Caco-2 (cell line): ENCODE measurements at regions of chr11 and their contacts with region 1.

Region 1: DNA sequence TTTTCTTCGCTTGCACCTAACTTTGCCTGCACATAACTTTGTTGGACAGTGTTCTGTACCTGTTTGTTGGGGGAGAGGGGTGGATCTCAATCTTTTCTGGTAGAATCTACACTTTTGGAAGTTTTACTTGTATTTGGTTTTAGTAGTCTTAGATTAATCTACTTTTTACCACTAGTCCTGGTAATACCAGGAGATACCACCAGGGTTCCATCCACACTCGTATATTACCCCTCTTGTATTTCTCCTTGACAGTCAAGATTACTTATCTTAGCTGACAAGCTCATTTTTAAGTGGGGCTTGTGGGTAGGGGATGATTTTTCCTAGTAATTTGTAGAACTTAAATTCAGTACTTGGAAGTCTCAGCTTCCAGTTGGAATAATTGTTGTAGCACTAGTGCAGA is 37.3 kb upstream of the TECTA start:
- DNase-seq: peak in 1 of 2 experiments; percentile 21
- H3K4me3 ChIP-seq: no peak overlapping the region
- H3K4me3 Mint-ChIP-seq: no peak overlapping the region
- H3K27ac Mint-ChIP-seq: no peak overlapping the region
- H3K4me1 ChIP-seq: peaks cover 20% of the 10 kb centered on the region
- H3K4me1 Mint-ChIP-seq: peaks cover 26% of the 10 kb centered on the region
- H3K27me3 ChIP-seq: no peaks in the 10 kb centered on the region
- H3K27me3 Mint-ChIP-seq: no peaks in the 10 kb centered on the region
- CTCF ChIP-seq: peak; percentile 42 to 67

Region 2: GRCh38 chr11:121023848-121024751 is 39.6 kb before region 1 on chr11 and contains the start of gene TBCEL:
- CTCF ChIA-PET with region 1: no interaction called
- POLR2A ChIA-PET with region 1: no interaction called
- intact Hi-C with region 1: no loop called
- DNase-seq: peak; percentile 95 to 96
- H3K4me3 ChIP-seq: peak within 1 kb of the TSS; percentile 98
- H3K4me3 Mint-ChIP-seq: peak within 1 kb of the TSS; percentile 73
- H3K27ac Mint-ChIP-seq: peak within 1 kb of the TSS; percentile 77
- H3K4me1 ChIP-seq: peaks cover 4% of the 10 kb centered on the region; the same call in 1 of the 2 replicates
- H3K4me1 Mint-ChIP-seq: peaks cover 19% of the 10 kb centered on the region
- H3K27me3 ChIP-seq: no peaks in the 10 kb centered on the region
- H3K27me3 Mint-ChIP-seq: peaks cover 3% of the 10 kb centered on the region
- CTCF ChIP-seq: no peak
- total RNA-seq, gene TBCEL: 23.6 and 24.3 TPM in 2 replicates

Region 3: GRCh38 chr11:121039971-121040613 is 23.6 kb before region 1 on chr11:
- CTCF ChIA-PET with region 1: no interaction called
- POLR2A ChIA-PET with region 1: interaction called, 4 read pairs
- intact Hi-C with region 1: loop called (anchors 1 kb)
- DNase-seq: no peak
- H3K4me3 ChIP-seq: no peak overlapping the region
- H3K4me3 Mint-ChIP-seq: no peak overlapping the region
- H3K27ac Mint-ChIP-seq: no peak overlapping the region
- H3K4me1 ChIP-seq: peaks cover 17% of the 10 kb centered on the region
- H3K4me1 Mint-ChIP-seq: peaks cover 28% of the 10 kb centered on the region
- H3K27me3 ChIP-seq: no peaks in the 10 kb centered on the region
- H3K27me3 Mint-ChIP-seq: no peaks in the 10 kb centered on the region
- CTCF ChIP-seq: no peak

Region 4: GRCh38 chr11:121048464-121049233 is 15.1 kb before region 1 on chr11:
- CTCF ChIA-PET with region 1: no interaction called
- POLR2A ChIA-PET with region 1: interaction called, 4 read pairs
- intact Hi-C with region 1: loop called (anchors 2 kb)
- DNase-seq: no peak
- H3K4me3 ChIP-seq: no peak overlapping the region
- H3K4me3 Mint-ChIP-seq: no peak overlapping the region
- H3K27ac Mint-ChIP-seq: no peak overlapping the region
- H3K4me1 ChIP-seq: peaks cover 15% of the 10 kb centered on the region
- H3K4me1 Mint-ChIP-seq: peaks cover 9% of the 10 kb centered on the region
- H3K27me3 ChIP-seq: no peaks in the 10 kb centered on the region
- H3K27me3 Mint-ChIP-seq: no peaks in the 10 kb centered on the region
- CTCF ChIP-seq: no peak

Region 5: DNA sequence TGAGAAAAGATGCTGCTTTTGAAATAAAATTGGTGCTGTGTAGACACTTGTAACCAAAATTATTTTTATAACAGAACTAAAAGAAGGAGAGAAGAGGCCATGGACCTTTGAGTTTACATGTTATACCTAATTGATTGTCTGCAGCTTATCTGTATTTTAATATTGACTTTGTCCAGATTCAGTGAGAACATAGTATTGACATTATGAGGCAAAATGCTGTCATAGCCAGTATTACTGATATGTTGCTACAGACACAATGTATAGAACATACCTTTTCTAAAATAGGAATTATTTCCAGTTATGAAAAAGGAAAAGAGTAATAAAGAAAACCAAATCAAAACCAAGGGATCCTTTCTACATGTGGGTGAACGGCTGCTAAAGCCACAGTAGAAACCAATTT is 25.8 kb after region 1 on chr11:
- CTCF ChIA-PET with region 1: no interaction called
- POLR2A ChIA-PET with region 1: no interaction called
- intact Hi-C with region 1: loop called (anchors 2 kb)
- DNase-seq: no peak
- H3K4me3 ChIP-seq: no peak overlapping the region
- H3K4me3 Mint-ChIP-seq: no peak overlapping the region
- H3K27ac Mint-ChIP-seq: no peak overlapping the region
- H3K4me1 ChIP-seq: peaks cover 7% of the 10 kb centered on the region
- H3K4me1 Mint-ChIP-seq: peaks cover 22% of the 10 kb centered on the region
- H3K27me3 ChIP-seq: no peaks in the 10 kb centered on the region
- H3K27me3 Mint-ChIP-seq: no peaks in the 10 kb centered on the region
- CTCF ChIP-seq: no peak

Region 6: DNA sequence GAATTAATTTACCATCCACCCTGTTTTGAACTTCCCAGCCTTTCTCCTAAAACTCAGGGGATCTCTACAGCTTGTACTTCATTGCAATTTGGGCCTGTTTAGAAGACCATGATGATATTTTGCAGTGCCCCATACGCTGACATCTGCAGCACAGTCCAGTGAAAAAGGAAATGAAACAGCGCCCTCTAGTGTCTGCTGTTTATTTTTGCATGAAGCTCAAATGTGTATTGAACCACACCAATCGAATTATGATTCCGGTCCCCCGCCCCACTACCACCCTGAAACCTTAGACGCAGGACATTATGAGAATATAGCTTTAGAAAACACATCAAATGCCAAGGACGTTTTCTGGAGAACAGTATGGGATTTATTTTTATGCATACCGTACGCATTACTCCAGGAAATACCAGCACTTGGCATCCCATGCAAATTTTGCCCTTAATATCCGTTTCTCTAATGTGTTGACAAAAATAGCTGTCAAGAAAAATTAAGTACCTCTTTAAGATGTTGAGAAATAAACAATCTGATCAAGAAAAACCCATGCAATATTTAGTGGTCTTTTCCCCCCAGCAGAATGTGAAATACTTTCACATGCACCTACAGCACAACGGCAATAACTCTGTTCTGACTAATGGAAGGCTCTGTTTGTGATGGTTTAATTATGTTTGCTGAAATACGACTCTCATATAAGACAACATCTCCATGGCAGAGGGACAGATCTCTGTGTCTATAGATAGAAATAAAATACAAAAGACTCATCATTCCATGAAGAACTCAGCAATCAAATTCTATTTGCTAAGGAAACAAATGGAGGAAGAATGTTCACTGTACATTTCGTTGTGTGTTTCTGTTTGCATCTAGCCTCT is 131.2 kb after region 1 on chr11:
- CTCF ChIA-PET with region 1: interaction called, 10 read pairs
- POLR2A ChIA-PET with region 1: no interaction called
- intact Hi-C with region 1: no loop called
- DNase-seq: peak; percentile 58 to 84
- H3K4me3 ChIP-seq: no peak overlapping the region
- H3K4me3 Mint-ChIP-seq: no peak overlapping the region
- H3K27ac Mint-ChIP-seq: no peak overlapping the region
- H3K4me1 ChIP-seq: no peaks in the 10 kb centered on the region
- H3K4me1 Mint-ChIP-seq: no peaks in the 10 kb centered on the region
- H3K27me3 ChIP-seq: no peaks in the 10 kb centered on the region
- H3K27me3 Mint-ChIP-seq: peaks cover 24% of the 10 kb centered on the region
- CTCF ChIP-seq: peak; percentile 92 to 94